Cardiac septum (tissue), 1 donor: ENCODE measurements at regions of chr9 and their contacts with region 1.

Region 1: GRCh38 chr9:35258676-35259474 is 97.1 kb downstream of the UNC13B start:
- DNase-seq: peak; percentile 78

Region 2: GRCh38 chr9:35116898-35117551 is 141.8 kb before region 1 on chr9:
- intact Hi-C with region 1: loop called (anchors 1 kb)
- DNase-seq: peak; percentile 94

Region 3: GRCh38 chr9:35161713-35162604 is 96.9 kb before region 1 on chr9 and contains the start of gene UNC13B:
- intact Hi-C with region 1: loop called (anchors 5 kb)
- DNase-seq: peak; percentile 96
- total RNA-seq, gene UNC13B: 24.7 TPM

Region 4: GRCh38 chr9:35225677-35226076 is 33.2 kb before region 1 on chr9:
- intact Hi-C with region 1: no loop called
- DNase-seq: no peak